Activated CD4-positive, alpha-beta T cell treated with anti-CD3 and anti-CD28 coated beads, Interleukin-2, amount 10 ng/mL, durations not matched to agents 24 days and 14 days (primary cell): ENCODE measurements at regions of chr7 and their contacts with region 1.

Region 1: DNA sequence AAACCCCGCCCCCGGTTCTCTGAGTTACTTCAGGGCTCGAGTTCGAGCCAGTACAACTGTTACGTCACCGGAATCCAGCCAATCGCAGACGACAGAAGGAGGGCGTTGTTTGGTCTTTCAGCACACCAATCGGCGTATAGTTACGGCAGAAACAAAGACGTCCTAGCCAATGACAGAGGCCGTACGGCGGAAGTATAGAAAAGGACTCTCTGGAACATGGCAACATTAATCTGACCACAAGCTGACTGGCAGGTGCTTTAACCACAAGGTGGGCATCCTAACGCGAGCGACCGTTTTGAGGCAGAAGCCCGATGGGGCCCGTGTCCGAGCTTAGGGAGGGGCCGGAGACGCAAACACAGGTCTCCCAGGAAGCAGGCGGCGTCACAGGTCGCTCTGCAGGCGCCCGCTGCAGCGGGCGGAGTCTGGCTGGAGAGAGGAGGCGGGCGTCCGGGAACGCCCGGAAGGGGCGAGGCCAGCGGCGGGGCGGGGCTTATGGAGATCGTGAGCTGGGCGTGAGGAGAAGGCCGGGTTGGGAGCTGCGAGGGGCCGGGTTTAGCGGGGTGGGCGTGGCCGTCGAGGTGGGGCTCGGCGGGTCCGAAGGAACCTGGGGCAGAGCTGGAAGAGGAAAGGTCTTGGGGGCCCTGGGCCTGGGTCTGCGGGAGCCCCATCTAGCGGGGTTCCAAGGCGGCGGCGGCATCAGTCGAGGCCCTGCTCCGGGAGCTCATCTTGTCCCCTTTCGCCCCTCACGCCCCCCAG is at the start of gene MOSPD3:
- DNase-seq: peak; percentile 100
- H3K4me3 Mint-ChIP-seq: peak within 1 kb of the TSS; percentile 97
- H3K27ac Mint-ChIP-seq: peak within 1 kb of the TSS; percentile 100
- H3K4me1 Mint-ChIP-seq: peaks cover 18% of the 10 kb centered on the region
- H3K27me3 Mint-ChIP-seq: peaks cover 9% of the 10 kb centered on the region
- total RNA-seq, gene MOSPD3: 11.3 and 12.1 TPM in 2 replicates

Region 2: GRCh38 chr7:100626530-100627237 is 14.5 kb after region 1 on chr7:
- intact Hi-C with region 1: loop called (anchors 1 kb)
- DNase-seq: peak; percentile 94
- H3K4me3 Mint-ChIP-seq: peak overlapping the region; percentile 82
- H3K27ac Mint-ChIP-seq: peak overlapping the region; percentile 76
- H3K4me1 Mint-ChIP-seq: peaks cover 42% of the 10 kb centered on the region
- H3K27me3 Mint-ChIP-seq: no peaks in the 10 kb centered on the region

Region 3: DNA sequence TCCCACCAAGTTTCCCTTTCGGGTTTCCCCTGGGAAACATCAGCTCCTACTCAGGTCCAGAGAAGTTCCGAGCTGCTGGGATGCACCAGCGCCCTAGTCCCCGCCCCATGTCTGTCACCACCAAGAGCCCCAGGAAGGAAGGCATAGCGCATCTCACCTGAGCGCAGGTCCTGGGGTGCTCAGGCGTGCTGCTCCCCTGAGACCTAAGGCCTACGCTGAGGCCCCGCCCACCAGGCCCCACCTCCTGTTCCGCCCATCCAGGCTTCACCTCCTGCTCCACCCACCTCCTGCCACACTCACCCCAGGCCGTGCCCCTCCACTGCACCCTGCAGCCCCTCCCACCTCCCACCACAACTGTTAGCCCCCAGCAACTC is 30.4 kb after region 1 on chr7:
- intact Hi-C with region 1: no loop called
- DNase-seq: peak; percentile 77
- H3K4me3 Mint-ChIP-seq: no peak overlapping the region
- H3K27ac Mint-ChIP-seq: no peak overlapping the region
- H3K4me1 Mint-ChIP-seq: no peaks in the 10 kb centered on the region
- H3K27me3 Mint-ChIP-seq: peaks cover 3% of the 10 kb centered on the region